Gastrocnemius medialis (tissue), 4 donors: ENCODE measurements at regions of chr16 and their contacts with region 1.

Region 1: DNA sequence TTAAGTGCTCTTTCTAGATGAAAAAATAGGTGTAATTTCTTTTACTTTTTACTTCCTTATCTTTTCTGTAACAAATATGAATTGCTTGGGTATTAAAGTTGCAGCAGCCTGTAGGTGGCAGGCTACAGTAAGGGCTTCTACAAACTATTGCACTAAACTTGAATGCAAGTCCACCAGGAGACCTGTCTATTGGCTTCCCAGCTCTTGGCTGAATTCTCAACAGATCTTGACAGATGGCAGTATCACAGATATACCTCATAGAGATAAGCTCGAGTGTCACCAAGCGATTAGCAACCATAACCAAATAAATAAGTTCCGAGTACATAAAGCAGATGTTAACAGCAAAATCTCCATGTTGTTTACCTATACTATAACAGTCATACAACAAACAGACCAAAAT is 5.9 kb downstream of the BBS2 start:
- DNase-seq: peak in 1 of 2 donors; percentile 41
- ATAC-seq: peak; percentile 74 to 75
- H3K4me3 ChIP-seq: no peak overlapping the region
- H3K27ac ChIP-seq: peak overlapping the region in 2 of 4 donors; percentile 14 to 16
- H3K4me1 ChIP-seq: peaks cover 44 to 63% of the 10 kb centered on the region in 2 donors
- H3K27me3 ChIP-seq: no peaks in the 10 kb centered on the region
- CTCF ChIP-seq: peak; percentile 37 to 69 (median 51)
- POLR2A ChIP-seq: no peak

Region 2: DNA sequence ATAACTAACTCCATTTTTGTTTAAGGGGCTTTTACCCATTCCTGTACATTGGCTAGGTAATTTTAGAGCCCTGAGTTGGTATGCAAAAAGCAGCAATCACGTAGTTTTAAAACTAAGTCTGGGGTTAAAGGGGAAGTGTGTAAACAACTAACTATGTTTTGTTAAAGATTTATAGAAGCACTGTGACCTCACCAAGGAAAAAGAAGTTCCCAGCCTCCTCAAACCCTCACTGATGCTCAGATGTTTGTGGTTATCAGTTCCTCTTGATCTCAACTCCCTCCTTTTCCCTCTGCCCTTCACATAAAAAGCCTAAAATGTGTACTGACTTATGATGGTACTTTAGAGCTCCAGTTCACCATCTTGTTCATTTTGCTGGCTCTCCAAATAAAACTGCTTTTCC is 1309.9 kb before region 1 on chr16:
- in situ Hi-C with region 1: no loop called
- intact Hi-C with region 1: no loop called
- DNase-seq: no peak
- ATAC-seq: no peak
- H3K4me3 ChIP-seq: no peak overlapping the region
- H3K27ac ChIP-seq: no peak overlapping the region
- H3K4me1 ChIP-seq: no peaks in the 10 kb centered on the region
- H3K27me3 ChIP-seq: peaks cover 0 to 6% (median 0%) of the 10 kb centered on the region in 3 donors
- CTCF ChIP-seq: no peak
- POLR2A ChIP-seq: no peak

Region 3: GRCh38 chr16:56532714-56533113 is 18.7 kb after region 1 on chr16:
- in situ Hi-C with region 1: no loop called
- intact Hi-C with region 1: no loop called
- DNase-seq: no peak
- ATAC-seq: no peak
- H3K4me3 ChIP-seq: no peak overlapping the region
- H3K27ac ChIP-seq: no peak overlapping the region
- H3K4me1 ChIP-seq: no peaks in the 10 kb centered on the region
- H3K27me3 ChIP-seq: no peaks in the 10 kb centered on the region
- CTCF ChIP-seq: no peak
- POLR2A ChIP-seq: no peak

Region 4: GRCh38 chr16:56600398-56600999 is 86.5 kb after region 1 on chr16:
- in situ Hi-C with region 1: loop called in 1 of 4 experiments (anchors 10 kb)
- intact Hi-C with region 1: loop called (anchors 5 kb)
- DNase-seq: no peak
- ATAC-seq: no peak
- H3K4me3 ChIP-seq: no peak overlapping the region
- H3K27ac ChIP-seq: no peak overlapping the region
- H3K4me1 ChIP-seq: peaks cover 17 to 20% of the 10 kb centered on the region in 2 donors
- H3K27me3 ChIP-seq: no peaks in the 10 kb centered on the region
- CTCF ChIP-seq: peak; percentile 25 to 55 (median 46)
- POLR2A ChIP-seq: no peak